Activated CD4-positive, alpha-beta memory T cell treated with anti-CD3 and anti-CD28 coated beads, Interleukin-2, amount 10 ng/mL, durations not matched to agents 7 days and 5 days (primary cell): ENCODE measurements at regions of chr18 and their contacts with region 1.

Region 1: DNA sequence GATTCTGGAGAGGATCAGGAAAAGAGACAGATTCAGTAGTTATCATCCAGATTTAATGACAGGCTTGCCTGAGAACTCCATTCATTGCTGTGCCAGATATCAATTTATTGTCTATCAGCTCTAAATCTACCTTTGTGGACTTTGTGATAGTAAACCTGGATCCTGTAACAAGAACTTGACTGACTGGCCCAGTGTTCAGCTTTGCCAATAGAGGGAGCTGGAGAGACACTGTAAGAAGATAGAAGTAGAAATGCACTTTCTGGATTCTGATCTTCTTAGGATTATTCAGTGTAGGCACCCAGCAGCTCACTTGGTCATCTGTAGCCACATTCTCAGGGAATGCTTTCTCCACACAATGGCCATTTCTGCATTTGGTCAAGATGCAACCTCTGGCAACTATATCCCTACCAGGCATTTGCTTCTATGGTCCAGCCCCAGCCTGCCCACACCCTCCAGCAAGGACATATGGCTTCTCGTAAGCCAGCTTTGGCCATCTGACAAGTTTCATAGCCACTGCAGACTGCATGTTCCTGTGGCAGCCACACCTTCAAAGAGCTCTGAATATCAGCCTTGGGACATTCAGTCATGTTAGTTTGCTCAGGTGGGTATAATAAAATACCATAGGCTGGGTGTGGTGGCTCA is 6.1 kb upstream of the SERPINB8 start:
- DNase-seq: peak; percentile 52
- H3K4me3 Mint-ChIP-seq: no peak overlapping the region
- H3K27ac Mint-ChIP-seq: no peak overlapping the region
- H3K4me1 Mint-ChIP-seq: no peaks in the 10 kb centered on the region
- H3K27me3 Mint-ChIP-seq: no peaks in the 10 kb centered on the region

Region 2: GRCh38 chr18:63936156-63936931 is 27.4 kb before region 1 on chr18:
- CTCF ChIA-PET with region 1: interaction called, 17 read pairs
- POLR2A ChIA-PET with region 1: no interaction called
- DNase-seq: peak; percentile 76
- H3K4me3 Mint-ChIP-seq: peak overlapping the region; percentile 71
- H3K27ac Mint-ChIP-seq: no peak overlapping the region
- H3K4me1 Mint-ChIP-seq: peaks cover 3% of the 10 kb centered on the region
- H3K27me3 Mint-ChIP-seq: peaks cover 17% of the 10 kb centered on the region

Region 3: GRCh38 chr18:63979409-63979920 is 15.7 kb after region 1 on chr18:
- CTCF ChIA-PET with region 1: interaction called, 30 read pairs
- POLR2A ChIA-PET with region 1: interaction called, 3 read pairs
- DNase-seq: peak; percentile 42
- H3K4me3 Mint-ChIP-seq: peak overlapping the region; percentile 54
- H3K27ac Mint-ChIP-seq: no peak overlapping the region
- H3K4me1 Mint-ChIP-seq: peaks cover 32% of the 10 kb centered on the region
- H3K27me3 Mint-ChIP-seq: no peaks in the 10 kb centered on the region

Region 4: DNA sequence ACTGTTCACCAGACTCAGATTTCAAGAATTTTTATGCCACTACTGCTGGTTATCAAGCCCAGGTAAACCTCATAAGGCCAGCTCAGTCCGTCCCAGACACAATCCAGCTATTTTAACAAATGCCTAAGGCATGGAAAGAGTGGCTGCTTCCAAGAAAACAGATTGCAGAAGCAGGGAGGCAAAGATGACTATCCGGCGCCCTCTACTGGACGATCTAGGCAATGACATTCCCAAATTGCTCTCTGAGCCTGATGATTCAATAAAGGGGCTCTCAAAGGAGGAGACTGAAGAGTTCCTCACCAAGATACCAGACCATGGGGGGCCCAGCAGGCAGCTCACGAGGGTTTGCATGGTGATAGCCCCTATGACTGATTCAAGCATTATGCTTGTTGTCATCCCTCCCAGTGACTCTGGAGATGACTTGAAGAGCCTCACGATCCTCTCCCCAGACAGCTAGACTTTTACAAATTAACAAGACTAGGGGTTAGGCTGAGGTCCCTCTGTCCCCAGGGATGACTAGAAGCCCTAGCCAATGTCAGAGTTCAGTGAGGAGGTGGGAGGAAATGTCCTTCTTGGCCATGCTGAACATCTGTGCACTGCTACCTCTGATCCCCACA is 31.2 kb after region 1 on chr18:
- CTCF ChIA-PET with region 1: interaction called, 13 read pairs
- POLR2A ChIA-PET with region 1: no interaction called
- DNase-seq: peak; percentile 46
- H3K4me3 Mint-ChIP-seq: no peak overlapping the region
- H3K27ac Mint-ChIP-seq: no peak overlapping the region
- H3K4me1 Mint-ChIP-seq: peaks cover 8% of the 10 kb centered on the region
- H3K27me3 Mint-ChIP-seq: no peaks in the 10 kb centered on the region